ENCODE measurements at regions of chr19 and their contacts with region 1.

Region 1: GRCh38 chr19:58362272-58362994 is at the start of gene ZNF497:
- DNase-seq: peak; percentile 94 to 98 (median 96)
- ATAC-seq: peak; percentile 86 to 88
- H3K4me3 Mint-ChIP-seq: peak within 1 kb of the TSS; percentile 83 to 97 (median 93)
- H3K27ac Mint-ChIP-seq: peak within 1 kb of the TSS; percentile 85 to 97 (median 94)
- H3K4me1 Mint-ChIP-seq: peaks cover 10 to 18% (median 16%) of the 10 kb centered on the region in 4 donors
- H3K27me3 Mint-ChIP-seq: no peaks in the 10 kb centered on the region
- polyA plus RNA-seq, gene ZNF497: 1.8 to 2.2 (median 1.9) TPM

Region 2: DNA sequence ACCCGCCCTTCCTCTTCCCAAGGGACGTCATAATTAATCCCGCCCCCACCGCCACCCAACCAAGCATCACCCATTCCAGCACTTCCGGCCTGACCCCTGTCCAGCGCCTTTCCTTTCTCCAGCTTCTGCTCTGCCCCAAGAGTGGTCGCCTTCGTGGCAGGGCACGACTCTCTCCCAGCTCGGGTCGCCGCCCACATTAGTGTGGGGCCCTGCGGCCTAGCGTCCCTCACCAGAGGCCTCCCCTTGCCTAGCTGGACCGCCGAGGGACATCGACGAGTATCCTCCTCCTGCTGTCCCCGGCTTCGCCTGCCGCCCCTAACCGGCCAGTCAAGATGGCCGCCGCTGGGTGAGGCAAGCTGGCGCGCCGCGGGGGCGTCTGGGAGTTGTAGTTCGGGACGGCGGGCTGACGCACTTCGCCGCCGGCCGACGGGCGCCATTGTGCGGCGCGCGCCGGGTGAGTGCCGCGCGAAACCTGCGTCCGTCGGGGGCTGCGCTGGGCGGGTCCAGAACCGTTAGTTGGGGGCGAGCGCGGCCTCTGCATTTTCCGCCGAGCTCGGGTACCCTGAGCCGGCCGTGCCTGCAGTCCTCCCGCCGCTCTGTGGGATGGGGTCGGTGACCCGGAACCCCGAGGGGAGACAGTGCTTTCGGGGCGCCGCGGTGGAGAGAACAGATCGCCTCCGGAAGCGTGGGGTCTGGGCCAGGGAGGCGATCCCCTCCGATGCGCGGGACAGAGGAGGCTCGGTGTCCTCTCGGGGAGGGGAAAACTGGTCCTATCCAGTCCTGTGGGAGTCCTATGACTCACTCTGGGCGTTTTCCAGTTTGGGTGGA is 179.2 kb before region 1 on chr19 and contains the start of gene ZNF274:
- POLR2A ChIA-PET with region 1: interaction called, 27 read pairs
- DNase-seq: peak; percentile 85 to 96 (median 94)
- ATAC-seq: peak; percentile 87 to 91
- H3K4me3 Mint-ChIP-seq: peak within 1 kb of the TSS; percentile 87 to 98 (median 90)
- H3K27ac Mint-ChIP-seq: peak within 1 kb of the TSS; percentile 96 to 100 (median 99)
- H3K4me1 Mint-ChIP-seq: peaks cover 11 to 31% (median 22%) of the 10 kb centered on the region in 4 donors
- H3K27me3 Mint-ChIP-seq: no peaks in the 10 kb centered on the region
- polyA plus RNA-seq, gene ZNF274: 26.5 to 38.7 (median 34.9) TPM

Region 3: GRCh38 chr19:58203814-58204475 is 158.5 kb before region 1 on chr19:
- POLR2A ChIA-PET with region 1: no interaction called
- DNase-seq: no peak
- ATAC-seq: no peak
- H3K4me3 Mint-ChIP-seq: peak overlapping the region in 1 of 10 donors; percentile 54
- H3K27ac Mint-ChIP-seq: no peak overlapping the region
- H3K4me1 Mint-ChIP-seq: peaks cover 0 to 5% (median 0%) of the 10 kb centered on the region in 4 donors
- H3K27me3 Mint-ChIP-seq: no peaks in the 10 kb centered on the region

Region 4: DNA sequence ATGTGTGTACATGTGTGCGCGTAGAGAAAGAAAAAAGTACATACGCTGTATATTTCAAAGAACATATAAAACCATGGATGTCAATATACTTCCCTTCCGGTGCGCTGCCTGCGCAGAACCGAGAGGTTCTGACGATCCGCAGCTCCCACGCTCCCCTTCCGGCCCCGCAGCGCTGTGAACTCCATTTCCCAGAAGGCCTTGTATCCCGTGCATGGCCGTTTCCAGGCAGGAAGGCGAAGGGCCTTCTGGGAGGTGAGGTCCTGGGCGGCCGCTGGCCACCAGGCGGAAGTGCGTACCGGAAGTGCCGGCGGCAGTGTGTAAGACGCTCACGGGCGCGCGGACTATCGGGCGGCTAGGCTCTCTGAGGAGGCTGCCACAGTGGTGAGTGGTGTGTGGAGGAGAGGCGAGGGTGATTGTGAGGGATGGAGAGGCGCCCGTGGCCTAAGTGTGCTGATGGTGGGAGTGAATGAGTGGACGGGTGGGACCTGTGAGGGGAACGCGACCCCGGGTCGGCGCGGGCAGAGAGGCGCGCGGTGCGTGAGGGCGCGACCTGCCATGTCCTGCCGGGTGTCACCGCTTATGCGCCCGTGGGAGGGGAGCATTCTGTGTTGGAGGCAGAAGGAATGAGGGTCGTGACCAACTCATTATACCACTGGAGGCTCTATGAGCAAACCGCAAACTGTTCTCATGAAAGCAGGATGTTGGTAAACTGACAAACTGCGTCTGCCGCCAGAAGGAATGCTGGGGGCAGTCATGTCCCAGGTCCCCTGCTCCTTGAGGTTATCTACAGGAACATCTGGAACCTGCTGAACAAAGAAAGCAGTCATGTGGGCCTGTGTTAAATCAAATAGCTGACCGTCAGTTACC is 57.1 kb before region 1 on chr19 and contains the start of gene ERVK3-1:
- POLR2A ChIA-PET with region 1: interaction called, 18 read pairs
- DNase-seq: peak; percentile 84 to 98 (median 94)
- ATAC-seq: peak; percentile 94 to 95
- H3K4me3 Mint-ChIP-seq: peak within 1 kb of the TSS; percentile 95 to 100 (median 100)
- H3K27ac Mint-ChIP-seq: peak within 1 kb of the TSS; percentile 99 to 100 (median 100)
- H3K4me1 Mint-ChIP-seq: peaks cover 19 to 63% (median 54%) of the 10 kb centered on the region in 4 donors
- H3K27me3 Mint-ChIP-seq: no peaks in the 10 kb centered on the region
- polyA plus RNA-seq, gene ERVK3-1: 55.1 to 80.9 (median 72.0) TPM

Region 5: GRCh38 chr19:58346961-58347931 is 15.2 kb before region 1 on chr19:
- POLR2A ChIA-PET with region 1: interaction called, 72 read pairs
- DNase-seq: peak; percentile 66 to 90 (median 77)
- ATAC-seq: peak; percentile 83 to 88
- H3K4me3 Mint-ChIP-seq: peak overlapping the region; percentile 93 to 98 (median 94)
- H3K27ac Mint-ChIP-seq: peak overlapping the region; percentile 88 to 98 (median 94)
- H3K4me1 Mint-ChIP-seq: peaks cover 23 to 46% (median 38%) of the 10 kb centered on the region in 4 donors
- H3K27me3 Mint-ChIP-seq: no peaks in the 10 kb centered on the region

Region 6: GRCh38 chr19:58380722-58381466 is 18.5 kb after region 1 on chr19 and contains the start of gene ZNF837:
- POLR2A ChIA-PET with region 1: interaction called, 43 read pairs
- DNase-seq: peak; percentile 92 to 100 (median 98)
- ATAC-seq: peak; percentile 83 to 85
- H3K4me3 Mint-ChIP-seq: peak within 1 kb of the TSS; percentile 85 to 99 (median 94)
- H3K27ac Mint-ChIP-seq: peak within 1 kb of the TSS; percentile 93 to 98 (median 97)
- H3K4me1 Mint-ChIP-seq: peaks cover 14 to 44% (median 35%) of the 10 kb centered on the region in 4 donors
- H3K27me3 Mint-ChIP-seq: no peaks in the 10 kb centered on the region
- polyA plus RNA-seq, gene ZNF837: 4.2 to 14.3 (median 9.9) TPM

Region 7: GRCh38 chr19:58408152-58409009 is 45.9 kb after region 1 on chr19 and contains the start of gene ZNF584:
- POLR2A ChIA-PET with region 1: interaction called, 15 read pairs
- DNase-seq: peak; percentile 88 to 97 (median 92)
- ATAC-seq: peak; percentile 92 to 97
- H3K4me3 Mint-ChIP-seq: peak within 1 kb of the TSS; percentile 94 to 98 (median 96)
- H3K27ac Mint-ChIP-seq: peak within 1 kb of the TSS; percentile 72 to 98 (median 96)
- H3K4me1 Mint-ChIP-seq: peaks cover 25 to 41% (median 35%) of the 10 kb centered on the region in 4 donors
- H3K27me3 Mint-ChIP-seq: no peaks in the 10 kb centered on the region
- polyA plus RNA-seq, gene ZNF584: 6.3 to 6.5 (median 6.4) TPM